A673 (cell line): ENCODE measurements at regions of chr11 and their contacts with region 1.

Region 1: DNA sequence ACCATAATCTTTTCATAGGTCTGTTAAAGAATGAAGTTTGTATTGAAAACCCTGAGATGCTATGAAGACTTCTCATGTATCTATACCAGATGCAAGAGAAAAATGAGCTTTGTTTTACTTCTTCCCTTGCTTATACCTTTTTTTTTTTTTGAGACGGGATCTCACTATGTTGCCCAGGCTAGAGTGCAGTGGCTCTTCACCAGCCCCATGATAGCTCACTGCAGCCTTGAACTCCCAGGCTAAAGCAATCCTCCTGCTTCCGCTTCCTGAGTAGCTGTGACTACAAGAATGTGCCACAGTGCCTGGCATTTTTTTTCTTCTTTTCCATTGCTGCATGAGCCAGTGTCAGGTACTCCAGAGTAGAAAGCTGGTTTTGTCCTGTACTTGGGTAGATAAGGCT is 10.8 kb downstream of the CEP295 start:
- DNase-seq: no peak
- H3K4me3 ChIP-seq: no peak overlapping the region
- H3K27ac ChIP-seq: peak overlapping the region; percentile 4
- H3K4me1 ChIP-seq: no peaks in the 10 kb centered on the region
- H3K27me3 ChIP-seq: no peaks in the 10 kb centered on the region
- CTCF ChIP-seq: no peak

Region 2: DNA sequence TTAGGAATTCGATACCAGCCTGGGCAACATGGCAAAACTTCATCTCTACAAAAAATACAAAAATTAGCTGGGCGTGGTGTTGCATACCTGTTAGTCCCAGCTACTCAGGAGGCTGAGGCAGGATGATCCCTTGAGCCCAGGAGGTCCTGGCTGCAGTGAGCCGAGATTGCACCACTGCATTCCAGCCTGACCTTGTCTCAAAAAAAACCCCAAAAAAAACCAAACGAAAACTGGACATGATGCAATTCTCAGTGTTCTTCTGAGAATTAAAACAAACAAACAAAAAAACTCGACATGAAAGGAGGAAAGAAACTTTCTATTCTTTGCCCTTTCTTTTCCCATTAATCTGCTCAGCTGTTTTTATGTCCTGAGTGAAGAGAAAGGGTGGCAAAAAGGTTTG is 119.2 kb after region 1 on chr11:
- CTCF ChIA-PET with region 1: no interaction called
- POLR2A ChIA-PET with region 1: no interaction called
- intact Hi-C with region 1: loop called (anchors 10 kb)
- DNase-seq: no peak
- H3K4me3 ChIP-seq: no peak overlapping the region
- H3K27ac ChIP-seq: no peak overlapping the region
- H3K4me1 ChIP-seq: peaks cover 5% of the 10 kb centered on the region
- H3K27me3 ChIP-seq: no peaks in the 10 kb centered on the region
- CTCF ChIP-seq: no peak

Region 3: DNA sequence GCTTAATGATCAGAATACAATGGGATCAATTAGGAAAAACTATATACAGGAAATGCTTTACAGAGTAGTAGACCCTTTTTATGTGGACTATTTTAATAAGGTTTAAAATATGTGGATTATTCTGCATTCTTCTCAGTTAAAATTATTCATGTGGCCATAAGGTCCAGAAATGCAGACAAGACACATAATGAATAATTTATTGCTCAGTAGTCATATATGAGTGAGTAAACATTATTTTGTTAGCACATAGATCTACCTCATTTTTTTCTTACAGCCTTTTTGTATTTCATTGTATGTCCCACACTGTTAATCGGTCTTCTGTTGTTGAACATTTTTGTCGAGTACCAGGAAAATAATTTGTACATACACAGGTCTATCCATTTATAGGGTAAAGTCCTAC is 132.6 kb after region 1 on chr11:
- CTCF ChIA-PET with region 1: no interaction called
- POLR2A ChIA-PET with region 1: no interaction called
- intact Hi-C with region 1: no loop called
- DNase-seq: no peak
- H3K4me3 ChIP-seq: no peak overlapping the region
- H3K27ac ChIP-seq: no peak overlapping the region
- H3K4me1 ChIP-seq: peaks cover 13% of the 10 kb centered on the region
- H3K27me3 ChIP-seq: no peaks in the 10 kb centered on the region
- CTCF ChIP-seq: no peak